CD14-positive monocyte (primary cell): ENCODE measurements at regions of chr1 and their contacts with region 1.

Region 1: DNA sequence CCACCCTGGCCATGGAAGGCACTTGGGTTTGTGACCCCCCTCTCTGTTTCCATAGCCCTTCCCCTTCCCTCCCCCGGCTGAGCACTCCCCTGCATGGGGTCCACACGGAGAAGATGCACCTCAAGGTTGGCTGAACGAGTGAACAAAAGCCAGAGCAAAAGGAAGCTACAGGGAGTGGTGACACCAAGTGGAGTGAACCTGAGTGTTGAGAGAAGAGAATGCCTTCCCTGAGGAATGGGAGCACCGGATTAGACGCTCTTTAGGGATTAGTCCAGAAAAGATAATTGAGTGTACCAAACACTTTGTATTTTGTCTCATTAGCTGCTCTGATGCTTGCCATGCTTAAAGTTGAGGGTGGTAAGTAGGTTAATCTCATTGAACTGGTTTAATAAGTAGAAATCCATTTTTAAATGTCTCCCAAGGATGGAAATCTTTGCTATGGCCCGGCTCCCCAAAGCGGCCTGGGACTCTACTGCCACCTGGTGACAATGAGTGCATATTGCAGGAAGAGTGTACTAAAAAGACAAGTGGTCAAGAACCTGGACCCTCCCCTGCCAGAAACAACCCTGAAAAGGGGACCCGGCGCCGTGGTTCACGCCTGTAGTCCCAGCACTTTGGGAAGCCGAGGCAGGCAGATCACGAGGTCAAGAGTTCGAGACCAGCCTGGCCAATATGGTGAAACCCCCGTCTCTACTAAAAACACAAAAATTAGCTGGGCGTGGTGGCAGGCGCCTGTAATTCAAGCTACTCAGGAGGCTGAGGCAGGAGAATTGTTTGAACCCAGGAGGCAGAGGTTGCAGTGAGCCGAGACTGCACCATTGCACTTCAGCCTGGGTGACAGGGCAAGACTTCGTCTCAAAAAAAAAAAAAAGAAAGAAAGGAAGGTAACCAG is 150.6 kb upstream of the ZC3H12A start:
- DNase-seq: peak; percentile 10 to 21 (median 20)
- H3K4me3 ChIP-seq: no peak overlapping the region
- H3K4me3 Mint-ChIP-seq: no peak overlapping the region
- H3K27ac ChIP-seq: no peak overlapping the region
- H3K27ac Mint-ChIP-seq: no peak overlapping the region
- H3K4me1 ChIP-seq: no peaks in the 10 kb centered on the region
- H3K4me1 Mint-ChIP-seq: no peaks in the 10 kb centered on the region
- H3K27me3 ChIP-seq: peaks cover 0 to 11% of the 10 kb centered on the region in 2 donors
- H3K27me3 Mint-ChIP-seq: peaks cover 12 to 24% (median 19%) of the 10 kb centered on the region in 3 donors
- CTCF ChIP-seq: peak; percentile 80

Region 2: GRCh38 chr1:36516372-36517325 is 807.1 kb before region 1 on chr1:
- intact Hi-C with region 1: loop called (anchors 2 to 5 kb)
- DNase-seq: peak; percentile 64 to 73 (median 70)
- H3K4me3 ChIP-seq: no peak overlapping the region
- H3K4me3 Mint-ChIP-seq: no peak overlapping the region
- H3K27ac ChIP-seq: no peak overlapping the region
- H3K27ac Mint-ChIP-seq: peak overlapping the region in 4 of 7 donors; percentile 26 to 75 (median 45)
- H3K4me1 ChIP-seq: peaks cover 22 to 23% of the 10 kb centered on the region in 2 donors
- H3K4me1 Mint-ChIP-seq: peaks cover 25% of the 10 kb centered on the region
- H3K27me3 ChIP-seq: no peaks in the 10 kb centered on the region
- H3K27me3 Mint-ChIP-seq: peaks cover 0 to 3% (median 0%) of the 10 kb centered on the region in 3 donors
- CTCF ChIP-seq: peak; percentile 98

Region 3: GRCh38 chr1:37574834-37575480 is 251.2 kb after region 1 on chr1:
- intact Hi-C with region 1: no loop called
- DNase-seq: no peak
- H3K4me3 ChIP-seq: no peak overlapping the region
- H3K4me3 Mint-ChIP-seq: no peak overlapping the region
- H3K27ac ChIP-seq: no peak overlapping the region
- H3K27ac Mint-ChIP-seq: no peak overlapping the region
- H3K4me1 ChIP-seq: no peaks in the 10 kb centered on the region
- H3K4me1 Mint-ChIP-seq: no peaks in the 10 kb centered on the region
- H3K27me3 ChIP-seq: no peaks in the 10 kb centered on the region
- H3K27me3 Mint-ChIP-seq: no peaks in the 10 kb centered on the region
- CTCF ChIP-seq: no peak